K562 (cell line): ENCODE measurements at regions of chr19 and their contacts with region 1.

Region 1: DNA sequence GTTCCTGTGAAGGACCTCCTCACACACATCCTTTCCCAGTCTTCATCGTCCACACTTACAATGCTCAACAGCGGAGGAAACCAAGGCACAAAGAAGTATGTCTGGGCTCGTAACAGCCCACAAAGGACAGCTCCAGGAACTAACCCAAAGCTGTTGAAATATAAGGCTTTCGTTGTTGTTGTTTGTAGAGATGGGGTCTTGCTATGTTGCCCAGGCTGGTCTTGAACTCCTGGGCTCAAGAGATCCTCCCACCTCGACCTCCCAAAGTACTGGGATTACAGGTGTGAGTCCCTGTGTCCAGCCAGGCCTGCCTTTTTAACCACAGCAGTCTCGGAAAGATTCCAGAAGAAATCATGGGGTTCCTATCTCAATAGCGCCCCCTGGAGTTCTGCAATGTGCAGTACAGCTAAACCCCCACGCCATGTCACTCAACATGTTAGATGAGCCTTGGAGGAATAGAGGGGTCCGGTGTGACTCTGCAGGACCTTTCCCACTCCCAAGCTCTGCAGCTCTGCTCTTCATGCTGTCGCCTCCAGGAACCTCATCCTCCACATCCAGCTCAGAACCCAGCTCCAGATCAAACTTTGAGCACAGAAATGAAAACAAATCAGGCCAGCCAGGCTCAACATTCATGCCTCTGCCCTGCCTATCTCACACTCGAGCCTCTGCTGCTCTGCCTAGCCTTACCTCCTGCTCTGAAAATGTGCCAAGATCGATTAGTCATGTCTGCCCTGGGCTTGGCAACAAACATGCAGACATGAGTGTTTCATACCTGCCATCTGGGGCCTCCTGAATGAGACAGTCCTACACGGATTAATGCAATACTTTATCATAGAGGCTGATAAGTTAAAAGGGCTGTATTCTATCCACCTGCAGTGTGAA is 7.5 kb downstream of the PLA2G4C start:
- DNase-seq: peak; percentile 71 to 82 (median 80)
- ATAC-seq: peak; percentile 79
- H3K4me3 ChIP-seq: peak overlapping the region; percentile 20; the same call in 1 of the 2 replicates
- H3K27ac ChIP-seq: no peak overlapping the region
- H3K4me1 ChIP-seq: peaks cover 0 to 7% of the 10 kb centered on the region in 2 experiments; a peak in 2 of 5 replicates
- H3K27me3 ChIP-seq: peaks cover 0 to 3% of the 10 kb centered on the region in 2 experiments; a peak in 3 of 5 replicates
- CTCF ChIP-seq: peak; percentile 86 to 91 (median 90)
- EP300 ChIP-seq: no peak
- POLR2A ChIP-seq: no peak
- RAD21 ChIP-seq: peak; percentile 64 to 90

Region 2: GRCh38 chr19:48085904-48086864 is 16.9 kb before region 1 on chr19:
- CTCF ChIA-PET with region 1: no interaction called
- POLR2A ChIA-PET with region 1: no interaction called
- in situ Hi-C with region 1: no loop called
- intact Hi-C with region 1: no loop called
- DNase-seq: no peak
- ATAC-seq: peak; percentile 76
- H3K4me3 ChIP-seq: no peak overlapping the region
- H3K27ac ChIP-seq: no peak overlapping the region
- H3K4me1 ChIP-seq: no peaks in the 10 kb centered on the region; a peak in 1 of 5 replicates
- H3K27me3 ChIP-seq: peaks cover 9 to 27% of the 10 kb centered on the region in 2 experiments; a peak in 4 of 5 replicates
- CTCF ChIP-seq: peak; percentile 50 to 57 (median 52); a peak in 5 of 6 replicates
- EP300 ChIP-seq: no peak
- POLR2A ChIP-seq: no peak
- RAD21 ChIP-seq: peak in 1 of 2 experiments; percentile 28; a peak in 2 of 4 replicates

Region 3: GRCh38 chr19:48123907-48124651 is 21.0 kb after region 1 on chr19:
- CTCF ChIA-PET with region 1: no interaction called
- POLR2A ChIA-PET with region 1: no interaction called
- in situ Hi-C with region 1: no loop called
- intact Hi-C with region 1: no loop called
- DNase-seq: no peak
- ATAC-seq: no peak
- H3K4me3 ChIP-seq: no peak overlapping the region
- H3K27ac ChIP-seq: no peak overlapping the region
- H3K4me1 ChIP-seq: peaks cover 3 to 7% of the 10 kb centered on the region in 2 experiments; a peak in 2 of 5 replicates
- H3K27me3 ChIP-seq: no peaks in the 10 kb centered on the region
- CTCF ChIP-seq: no peak
- EP300 ChIP-seq: no peak
- POLR2A ChIP-seq: no peak
- RAD21 ChIP-seq: no peak

Region 4: GRCh38 chr19:48290771-48291488 is 187.8 kb after region 1 on chr19:
- CTCF ChIA-PET with region 1: interaction called, 5 read pairs
- POLR2A ChIA-PET with region 1: no interaction called
- in situ Hi-C with region 1: no loop called
- intact Hi-C with region 1: loop called (anchors 10 kb)
- DNase-seq: peak; percentile 71 to 80 (median 77)
- ATAC-seq: peak; percentile 89
- H3K4me3 ChIP-seq: peak overlapping the region; percentile 30
- H3K27ac ChIP-seq: no peak overlapping the region
- H3K4me1 ChIP-seq: peaks cover 7 to 13% of the 10 kb centered on the region in 2 experiments; a peak in 4 of 5 replicates
- H3K27me3 ChIP-seq: peaks cover 0 to 6% of the 10 kb centered on the region in 2 experiments; a peak in 2 of 5 replicates
- CTCF ChIP-seq: peak; percentile 94 to 96 (median 95)
- EP300 ChIP-seq: no peak
- POLR2A ChIP-seq: no peak
- RAD21 ChIP-seq: peak; percentile 73 to 92